Esophagus muscularis mucosa (tissue), 4 donors: ENCODE measurements at regions of chr15 and their contacts with region 1.

Region 1: DNA sequence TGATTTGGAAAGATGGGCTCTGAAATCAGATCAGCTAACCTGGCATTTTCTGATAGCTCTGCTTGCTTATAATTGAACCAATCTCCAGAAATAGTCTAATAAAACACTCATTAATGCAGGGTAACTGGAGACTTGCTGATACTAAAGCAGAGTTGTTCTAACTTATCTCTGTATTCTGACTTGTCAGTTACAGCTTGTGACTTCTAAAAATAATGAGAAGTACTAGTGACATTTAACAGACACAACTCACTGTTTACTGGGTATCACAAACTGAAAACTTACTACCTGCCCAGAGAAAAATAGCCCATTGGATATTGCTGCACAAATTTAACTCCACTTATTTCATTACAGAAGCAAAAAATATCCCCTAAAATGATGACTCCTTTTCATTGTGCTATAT is 24.0 kb upstream of the TRPM7 start:
- DNase-seq: no peak
- H3K4me3 ChIP-seq: no peak overlapping the region
- H3K27ac ChIP-seq: no peak overlapping the region
- H3K4me1 ChIP-seq: no peaks in the 10 kb centered on the region
- H3K27me3 ChIP-seq: no peaks in the 10 kb centered on the region
- CTCF ChIP-seq: no peak
- EP300 ChIP-seq: no peak
- POLR2A ChIP-seq: no peak

Region 2: DNA sequence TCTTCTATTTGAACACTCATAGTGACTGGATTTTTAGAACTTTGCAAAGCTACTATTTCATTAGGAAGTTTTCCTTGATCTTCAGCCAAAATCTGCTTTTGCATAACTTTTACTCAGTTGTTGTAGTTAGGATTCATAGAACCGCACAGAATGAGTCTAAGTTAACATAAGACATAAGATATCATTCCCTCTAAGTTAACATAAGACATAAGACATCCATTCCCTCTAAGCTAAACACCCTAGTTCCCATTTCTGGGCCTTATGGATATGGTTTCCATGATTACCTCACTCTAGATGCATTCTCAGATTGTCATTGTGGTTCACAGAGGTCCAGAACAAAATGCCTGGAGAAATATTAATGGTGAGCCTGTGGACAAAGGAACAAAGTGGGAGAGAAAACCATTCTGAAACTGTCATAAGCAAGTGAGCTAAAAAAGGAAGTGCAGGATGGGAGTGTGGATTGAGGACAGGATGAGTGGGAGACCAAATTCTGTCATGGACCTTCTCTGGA is 1627.1 kb before region 1 on chr15:
- intact Hi-C with region 1: no loop called
- DNase-seq: no peak
- H3K4me3 ChIP-seq: no peak overlapping the region
- H3K27ac ChIP-seq: no peak overlapping the region
- H3K4me1 ChIP-seq: no peaks in the 10 kb centered on the region
- H3K27me3 ChIP-seq: no peaks in the 10 kb centered on the region
- CTCF ChIP-seq: no peak
- EP300 ChIP-seq: no peak
- POLR2A ChIP-seq: no peak

Region 3: GRCh38 chr15:50686468-50687301 is 23.9 kb before region 1 on chr15 and contains the start of gene TRPM7:
- intact Hi-C with region 1: loop called (anchors 2 kb)
- DNase-seq: peak; percentile 96
- H3K4me3 ChIP-seq: peak within 1 kb of the TSS; percentile 58 to 95 (median 84)
- H3K27ac ChIP-seq: peak within 1 kb of the TSS; percentile 86 to 97 (median 96)
- H3K4me1 ChIP-seq: peaks cover 27 to 46% (median 43%) of the 10 kb centered on the region in 4 donors
- H3K27me3 ChIP-seq: no peaks in the 10 kb centered on the region
- CTCF ChIP-seq: peak in 1 of 3 experiments; percentile 21
- EP300 ChIP-seq: no peak
- POLR2A ChIP-seq: peak; percentile 41
- total RNA-seq, gene TRPM7: 27.9 to 39.9 (median 33.9) TPM